Activated B cell treated with CpG ODN at 0.5 μM for 24 hours (primary cell): ENCODE measurements at regions of chr18 and their contacts with region 1.

Region 1: GRCh38 chr18:59041819-59042815 is 97.6 kb upstream of the SEC11C start:
- DNase-seq: no peak
- ATAC-seq: no peak
- H3K4me3 Mint-ChIP-seq: no peak overlapping the region
- H3K27ac Mint-ChIP-seq: no peak overlapping the region
- H3K4me1 Mint-ChIP-seq: no peaks in the 10 kb centered on the region
- H3K27me3 Mint-ChIP-seq: no peaks in the 10 kb centered on the region
- CTCF ChIP-seq: no peak

Region 2: DNA sequence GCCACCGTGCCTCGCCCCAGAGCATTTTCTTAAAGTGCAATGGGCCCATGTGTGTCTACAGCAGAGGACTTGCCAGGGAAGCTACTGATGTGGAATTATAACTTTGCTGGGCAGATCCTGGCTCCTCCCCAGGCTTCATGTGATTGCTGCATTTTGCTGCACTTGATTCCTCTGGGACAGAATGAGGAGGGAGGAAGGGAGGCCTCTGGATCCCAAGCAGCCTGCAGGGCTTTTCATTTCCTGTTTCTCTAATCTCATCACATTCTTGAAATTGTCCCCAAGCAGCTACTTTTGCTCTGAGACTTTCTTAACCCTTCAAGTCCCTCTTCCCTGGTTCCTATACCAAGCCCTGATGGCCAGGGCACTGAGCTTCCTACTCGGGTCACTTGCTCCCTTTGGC is 36.9 kb before region 1 on chr18:
- CTCF ChIA-PET with region 1: no interaction called
- POLR2A ChIA-PET with region 1: no interaction called
- intact Hi-C with region 1: loop called (anchors 5 kb)
- DNase-seq: no peak
- ATAC-seq: no peak
- H3K4me3 Mint-ChIP-seq: no peak overlapping the region
- H3K27ac Mint-ChIP-seq: no peak overlapping the region
- H3K4me1 Mint-ChIP-seq: no peaks in the 10 kb centered on the region
- H3K27me3 Mint-ChIP-seq: no peaks in the 10 kb centered on the region
- CTCF ChIP-seq: no peak

Region 3: GRCh38 chr18:59096098-59096789 is 54.1 kb after region 1 on chr18:
- CTCF ChIA-PET with region 1: no interaction called
- POLR2A ChIA-PET with region 1: no interaction called
- intact Hi-C with region 1: no loop called
- DNase-seq: no peak
- ATAC-seq: no peak
- H3K4me3 Mint-ChIP-seq: no peak overlapping the region
- H3K27ac Mint-ChIP-seq: no peak overlapping the region
- H3K4me1 Mint-ChIP-seq: peaks cover 23% of the 10 kb centered on the region
- H3K27me3 Mint-ChIP-seq: no peaks in the 10 kb centered on the region
- CTCF ChIP-seq: no peak